Pancreas (tissue), 10 donors: ENCODE measurements at regions of chr9 and their contacts with region 1.

Region 1: GRCh38 chr9:92265159-92265558 is 28.3 kb downstream of the IARS1 start:
- DNase-seq: no peak
- ATAC-seq: no peak
- H3K4me3 ChIP-seq: no peak overlapping the region
- H3K27ac ChIP-seq: no peak overlapping the region
- H3K4me1 ChIP-seq: no peaks in the 10 kb centered on the region
- H3K27me3 ChIP-seq: no peaks in the 10 kb centered on the region
- CTCF ChIP-seq: no peak

Region 2: DNA sequence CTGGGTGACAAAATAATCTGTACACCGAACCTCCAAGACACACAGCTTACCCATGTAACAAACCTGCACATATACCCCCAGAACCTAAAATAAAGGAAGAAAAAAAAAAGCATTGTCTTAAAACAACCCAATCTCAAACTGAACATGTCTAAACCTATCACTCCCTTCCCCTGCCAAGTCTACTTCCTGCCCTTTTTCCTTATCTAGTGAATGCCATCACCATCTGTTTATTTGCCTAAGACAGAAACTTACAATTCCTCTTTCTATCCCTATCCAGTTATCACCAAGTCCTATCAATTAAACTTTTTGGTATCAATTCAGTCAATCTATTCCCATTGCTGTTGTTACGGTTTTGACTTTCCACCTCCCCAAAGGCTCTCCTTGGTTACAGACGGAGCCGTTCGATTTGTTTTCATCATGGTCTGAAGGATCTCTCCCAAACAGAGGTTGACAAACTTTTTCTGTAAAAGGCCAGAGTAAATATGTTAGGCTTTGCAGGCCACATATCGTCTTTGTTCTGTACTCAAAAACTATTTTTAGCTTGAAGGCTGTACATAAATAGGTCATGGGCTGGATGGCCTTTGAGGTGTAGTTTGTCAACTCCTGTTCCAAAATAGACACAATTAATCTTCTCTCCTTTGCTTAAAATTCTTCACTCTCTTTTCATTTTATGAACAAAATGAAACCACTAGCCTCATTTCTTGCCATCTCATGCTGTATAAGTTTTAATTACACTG is 47.9 kb after region 1 on chr9:
- intact Hi-C with region 1: loop called in 1 of 3 experiments (anchors 10 kb)
- DNase-seq: no peak
- ATAC-seq: no peak
- H3K4me3 ChIP-seq: no peak overlapping the region
- H3K27ac ChIP-seq: no peak overlapping the region
- H3K4me1 ChIP-seq: peaks cover 0 to 4% (median 0%) of the 10 kb centered on the region in 3 donors
- H3K27me3 ChIP-seq: no peaks in the 10 kb centered on the region
- CTCF ChIP-seq: no peak